Tibial artery (tissue), 4 donors: ENCODE measurements at regions of chrX and their contacts with region 1.

Region 1: GRCh38 chrX:1591102-1591900 is at the start of gene AKAP17A:
- DNase-seq: peak; percentile 92 to 98
- H3K4me3 ChIP-seq: peak within 1 kb of the TSS; percentile 77 to 83
- H3K27ac ChIP-seq: peak within 1 kb of the TSS; percentile 76 to 86
- H3K4me1 ChIP-seq: peaks cover 0 to 22% (median 18%) of the 10 kb centered on the region in 4 donors
- H3K27me3 ChIP-seq: no peaks in the 10 kb centered on the region
- CTCF ChIP-seq: no peak

Region 2: GRCh38 chrX:989959-990510 is 601.3 kb before region 1 on chrX:
- intact Hi-C with region 1: loop called (anchors 10 kb)
- DNase-seq: peak in 1 of 2 donors; percentile 87
- H3K4me3 ChIP-seq: no peak overlapping the region
- H3K27ac ChIP-seq: no peak overlapping the region
- H3K4me1 ChIP-seq: no peaks in the 10 kb centered on the region
- H3K27me3 ChIP-seq: no peaks in the 10 kb centered on the region
- CTCF ChIP-seq: no peak

Region 3: DNA sequence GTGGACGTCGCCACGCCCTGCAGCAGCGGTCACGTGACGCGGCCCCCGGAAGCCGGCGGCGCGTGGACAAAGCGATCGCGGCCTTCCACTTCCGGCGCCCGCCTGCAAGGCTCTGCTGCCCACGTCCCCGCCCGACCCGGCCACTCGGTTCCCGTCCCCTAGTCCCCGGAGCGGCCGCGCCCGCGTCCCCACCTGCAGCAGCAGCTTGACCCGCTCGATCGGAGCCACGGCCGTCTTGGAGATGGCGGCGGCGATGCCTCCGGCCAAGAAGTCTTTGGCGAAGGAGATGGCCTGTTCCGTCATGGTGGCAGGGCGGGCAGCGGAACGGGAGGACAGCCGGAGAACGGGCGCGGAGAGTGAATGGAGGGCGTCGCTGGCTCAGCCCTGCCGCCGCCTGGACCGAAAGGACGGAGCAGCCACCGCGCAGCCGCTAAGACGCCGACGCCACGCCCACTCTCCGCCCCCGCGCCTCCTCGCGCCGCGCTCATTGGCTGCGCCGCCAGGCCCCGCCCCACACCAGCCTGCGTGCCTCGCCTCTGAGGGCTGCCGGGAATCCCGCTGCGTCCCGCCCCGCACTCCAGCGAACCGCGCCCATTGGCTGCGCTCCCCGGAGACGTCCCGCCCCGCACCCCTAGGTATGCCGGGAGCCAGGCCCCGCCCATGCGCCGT is 199.5 kb before region 1 on chrX and contains the start of gene SLC25A6:
- intact Hi-C with region 1: loop called (anchors 10 kb)
- DNase-seq: peak; percentile 97 to 99
- H3K4me3 ChIP-seq: peak within 1 kb of the TSS; percentile 89 to 92
- H3K27ac ChIP-seq: peak within 1 kb of the TSS; percentile 97 to 98
- H3K4me1 ChIP-seq: peaks cover 0 to 54% (median 43%) of the 10 kb centered on the region in 4 donors
- H3K27me3 ChIP-seq: no peaks in the 10 kb centered on the region
- CTCF ChIP-seq: peak; percentile 5 to 19

Region 4: GRCh38 chrX:1521459-1521956 is 69.8 kb before region 1 on chrX:
- intact Hi-C with region 1: no loop called
- DNase-seq: peak in 1 of 2 donors; percentile 53
- H3K4me3 ChIP-seq: no peak overlapping the region
- H3K27ac ChIP-seq: no peak overlapping the region
- H3K4me1 ChIP-seq: no peaks in the 10 kb centered on the region
- H3K27me3 ChIP-seq: no peaks in the 10 kb centered on the region
- CTCF ChIP-seq: no peak